T-cell (primary cell): ENCODE measurements at regions of chr18 and their contacts with region 1.

Region 1: GRCh38 chr18:63439334-63439733 is 17.1 kb upstream of the VPS4B start:
- DNase-seq: peak in 30 of 35 experiments; percentile 3 to 77 (median 28)
- ATAC-seq: peak; percentile 61 to 67 (median 64)
- H3K4me3 ChIP-seq: no peak overlapping the region
- H3K4me3 Mint-ChIP-seq: no peak overlapping the region
- H3K27ac ChIP-seq: no peak overlapping the region
- H3K27ac Mint-ChIP-seq: no peak overlapping the region
- H3K4me1 ChIP-seq: no peaks in the 10 kb centered on the region
- H3K4me1 Mint-ChIP-seq: peaks cover 0 to 4% (median 4%) of the 10 kb centered on the region in 3 donors
- H3K27me3 ChIP-seq: peaks cover 0 to 9% of the 10 kb centered on the region in 2 experiments
- H3K27me3 Mint-ChIP-seq: peaks cover 7% of the 10 kb centered on the region in 2 donors

Region 2: GRCh38 chr18:63016270-63016669 is 423.1 kb before region 1 on chr18:
- CTCF ChIA-PET with region 1: interaction called, 36 to 53 read pairs
- POLR2A ChIA-PET with region 1: interaction called in 1 of 2 experiments, 5 read pairs
- DNase-seq: peak in 30 of 35 experiments; percentile 9 to 80 (median 33)
- ATAC-seq: peak in 3 of 4 experiments; percentile 54 to 77 (median 65)
- H3K4me3 ChIP-seq: no peak overlapping the region
- H3K4me3 Mint-ChIP-seq: no peak overlapping the region
- H3K27ac ChIP-seq: no peak overlapping the region
- H3K27ac Mint-ChIP-seq: no peak overlapping the region
- H3K4me1 ChIP-seq: no peaks in the 10 kb centered on the region
- H3K4me1 Mint-ChIP-seq: no peaks in the 10 kb centered on the region
- H3K27me3 ChIP-seq: peaks cover 0 to 7% of the 10 kb centered on the region in 2 experiments
- H3K27me3 Mint-ChIP-seq: peaks cover 13 to 28% of the 10 kb centered on the region in 2 donors

Region 3: GRCh38 chr18:63339920-63340484 is 99.3 kb before region 1 on chr18:
- CTCF ChIA-PET with region 1: interaction called, 6 to 17 read pairs
- POLR2A ChIA-PET with region 1: no interaction called
- DNase-seq: peak in 28 of 35 experiments; percentile 7 to 75 (median 42)
- ATAC-seq: peak in 2 of 4 experiments; percentile 52 to 82
- H3K4me3 ChIP-seq: no peak overlapping the region
- H3K4me3 Mint-ChIP-seq: no peak overlapping the region
- H3K27ac ChIP-seq: no peak overlapping the region
- H3K27ac Mint-ChIP-seq: no peak overlapping the region
- H3K4me1 ChIP-seq: no peaks in the 10 kb centered on the region
- H3K4me1 Mint-ChIP-seq: peaks cover 2 to 10% (median 4%) of the 10 kb centered on the region in 3 donors
- H3K27me3 ChIP-seq: no peaks in the 10 kb centered on the region
- H3K27me3 Mint-ChIP-seq: no peaks in the 10 kb centered on the region

Region 4: GRCh38 chr18:63465059-63465458 is 25.7 kb after region 1 on chr18:
- CTCF ChIA-PET with region 1: no interaction called
- POLR2A ChIA-PET with region 1: no interaction called
- DNase-seq: no peak
- ATAC-seq: no peak
- H3K4me3 ChIP-seq: no peak overlapping the region
- H3K4me3 Mint-ChIP-seq: no peak overlapping the region
- H3K27ac ChIP-seq: no peak overlapping the region
- H3K27ac Mint-ChIP-seq: no peak overlapping the region
- H3K4me1 ChIP-seq: no peaks in the 10 kb centered on the region
- H3K4me1 Mint-ChIP-seq: no peaks in the 10 kb centered on the region
- H3K27me3 ChIP-seq: peaks cover 0 to 12% of the 10 kb centered on the region in 2 experiments
- H3K27me3 Mint-ChIP-seq: peaks cover 15 to 16% of the 10 kb centered on the region in 2 donors

Region 5: GRCh38 chr18:63511286-63511685 is 72.0 kb after region 1 on chr18:
- CTCF ChIA-PET with region 1: no interaction called
- POLR2A ChIA-PET with region 1: no interaction called
- DNase-seq: peak in 1 of 35 experiments; percentile 12
- ATAC-seq: no peak
- H3K4me3 ChIP-seq: no peak overlapping the region
- H3K4me3 Mint-ChIP-seq: no peak overlapping the region
- H3K27ac ChIP-seq: no peak overlapping the region
- H3K27ac Mint-ChIP-seq: no peak overlapping the region
- H3K4me1 ChIP-seq: no peaks in the 10 kb centered on the region
- H3K4me1 Mint-ChIP-seq: peaks cover 0 to 5% (median 0%) of the 10 kb centered on the region in 3 donors
- H3K27me3 ChIP-seq: no peaks in the 10 kb centered on the region
- H3K27me3 Mint-ChIP-seq: peaks cover 36 to 37% of the 10 kb centered on the region in 2 donors